Dendritic cell treated with granulocyte-macrophage colony-stimulating factor and Interleukin-4, amounts not matched to agents 40 ng/mL and 50 ng/mL, for 4 days (primary cell): ENCODE measurements at regions of chr3 and their contacts with region 1.

Region 1: GRCh38 chr3:44477312-44478030 is at the start of gene ZNF445:
- H3K4me3 Mint-ChIP-seq: peak within 1 kb of the TSS; percentile 81
- H3K27ac Mint-ChIP-seq: peak within 1 kb of the TSS; percentile 66
- H3K4me1 Mint-ChIP-seq: peaks cover 11% of the 10 kb centered on the region
- H3K27me3 Mint-ChIP-seq: no peaks in the 10 kb centered on the region

Region 2: DNA sequence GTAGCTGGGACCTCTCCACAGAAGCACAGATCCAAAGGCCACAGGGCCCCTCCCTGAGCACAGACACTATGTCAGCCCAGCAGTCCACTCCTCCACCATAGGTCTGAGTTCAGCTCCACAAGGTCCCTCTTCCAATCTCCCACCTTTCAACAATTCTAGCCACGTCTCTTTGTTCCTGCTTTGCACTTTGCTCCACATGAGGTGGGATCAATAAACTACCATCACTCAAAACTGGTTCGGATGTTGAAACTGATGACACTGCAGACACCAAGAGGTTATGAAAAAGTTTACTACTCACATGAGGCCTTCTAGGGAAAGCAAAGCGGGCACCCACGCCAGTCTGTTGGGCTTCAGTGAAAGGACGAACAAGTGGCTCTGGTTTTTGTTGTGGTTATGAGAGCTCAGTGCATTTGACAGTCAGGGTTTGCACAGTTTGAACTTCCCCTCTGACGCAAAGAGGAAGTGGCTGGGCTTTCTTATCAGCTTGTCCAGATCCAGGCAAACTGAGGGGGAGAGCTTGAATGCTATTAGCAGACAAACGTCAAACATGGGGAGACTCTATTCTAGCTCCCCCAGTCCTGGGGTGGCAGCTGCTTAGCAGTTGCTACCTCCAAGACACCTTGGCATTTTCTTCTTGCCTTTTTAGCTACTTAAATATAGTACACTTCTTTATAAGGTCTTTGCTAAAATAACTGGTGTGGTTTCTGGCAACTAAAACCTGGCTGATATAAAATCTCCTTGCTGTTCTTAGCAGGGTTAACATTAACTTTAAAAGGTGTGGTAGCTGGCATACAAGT is 37.8 kb before region 1 on chr3:
- intact Hi-C with region 1: loop called (anchors 2 kb)
- H3K4me3 Mint-ChIP-seq: peak overlapping the region; percentile 25
- H3K27ac Mint-ChIP-seq: peak overlapping the region; percentile 82
- H3K4me1 Mint-ChIP-seq: peaks cover 44% of the 10 kb centered on the region
- H3K27me3 Mint-ChIP-seq: peaks cover 2% of the 10 kb centered on the region

Region 3: DNA sequence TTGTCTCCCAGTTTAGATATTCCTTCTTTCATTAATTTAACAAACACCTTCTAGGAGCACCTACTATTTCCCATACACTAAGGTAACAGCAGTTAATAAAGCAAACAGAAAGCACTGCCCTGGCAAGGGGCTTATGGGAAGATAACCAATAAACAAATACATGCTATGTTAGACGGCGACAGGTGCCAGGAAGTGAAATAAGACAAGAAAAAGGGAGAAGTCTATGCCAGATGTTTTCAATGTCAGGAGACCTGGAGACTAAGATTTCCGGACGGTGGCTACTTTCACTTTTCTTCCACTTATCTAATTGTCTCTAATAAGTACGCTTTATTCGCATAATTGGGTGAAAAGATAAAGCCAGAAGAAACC is 32.5 kb after region 1 on chr3:
- intact Hi-C with region 1: loop called (anchors 1 kb)
- H3K4me3 Mint-ChIP-seq: peak overlapping the region; percentile 91
- H3K27ac Mint-ChIP-seq: peak overlapping the region; percentile 97
- H3K4me1 Mint-ChIP-seq: peaks cover 26% of the 10 kb centered on the region
- H3K27me3 Mint-ChIP-seq: peaks cover 3% of the 10 kb centered on the region

Region 4: GRCh38 chr3:44554626-44555592 is 77.4 kb after region 1 on chr3 and contains the start of gene ZKSCAN7:
- intact Hi-C with region 1: loop called (anchors 2 kb)
- H3K4me3 Mint-ChIP-seq: peak within 1 kb of the TSS; percentile 86
- H3K27ac Mint-ChIP-seq: peak within 1 kb of the TSS; percentile 81
- H3K4me1 Mint-ChIP-seq: peaks cover 12% of the 10 kb centered on the region
- H3K27me3 Mint-ChIP-seq: peaks cover 18% of the 10 kb centered on the region